Activated CD4-positive, alpha-beta memory T cell treated with anti-CD3 and anti-CD28 coated beads for 36 hours (primary cell): ENCODE measurements at regions of chr12 and their contacts with region 1.

Region 1: DNA sequence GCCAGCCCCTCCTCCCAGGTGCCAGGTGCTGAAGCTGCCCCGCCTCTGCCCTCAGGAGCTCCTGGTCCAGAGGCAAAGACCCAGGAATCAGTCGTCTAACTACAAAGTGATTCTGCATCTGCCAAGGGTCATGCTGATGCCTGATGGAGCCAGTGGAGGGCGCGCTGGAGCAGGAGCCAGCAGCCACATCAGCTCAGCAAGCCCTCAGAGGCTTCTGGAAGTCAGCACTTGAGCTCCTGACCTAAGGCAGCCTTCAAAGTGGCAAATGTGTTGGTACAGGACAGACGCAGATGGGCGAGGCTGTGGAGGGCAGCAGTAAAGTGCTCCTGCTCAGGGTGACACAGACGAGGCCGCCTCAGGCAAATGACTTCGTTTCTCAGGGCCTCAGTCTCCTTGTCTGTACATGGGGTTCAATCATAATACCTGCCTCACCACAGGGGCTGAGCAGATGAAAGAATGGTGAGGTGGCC is 10.9 kb downstream of the C12orf43 start:
- DNase-seq: peak; percentile 76
- H3K4me3 Mint-ChIP-seq: no peak overlapping the region
- H3K27ac Mint-ChIP-seq: peak overlapping the region; percentile 64
- H3K4me1 Mint-ChIP-seq: no peaks in the 10 kb centered on the region
- H3K27me3 Mint-ChIP-seq: no peaks in the 10 kb centered on the region

Region 2: DNA sequence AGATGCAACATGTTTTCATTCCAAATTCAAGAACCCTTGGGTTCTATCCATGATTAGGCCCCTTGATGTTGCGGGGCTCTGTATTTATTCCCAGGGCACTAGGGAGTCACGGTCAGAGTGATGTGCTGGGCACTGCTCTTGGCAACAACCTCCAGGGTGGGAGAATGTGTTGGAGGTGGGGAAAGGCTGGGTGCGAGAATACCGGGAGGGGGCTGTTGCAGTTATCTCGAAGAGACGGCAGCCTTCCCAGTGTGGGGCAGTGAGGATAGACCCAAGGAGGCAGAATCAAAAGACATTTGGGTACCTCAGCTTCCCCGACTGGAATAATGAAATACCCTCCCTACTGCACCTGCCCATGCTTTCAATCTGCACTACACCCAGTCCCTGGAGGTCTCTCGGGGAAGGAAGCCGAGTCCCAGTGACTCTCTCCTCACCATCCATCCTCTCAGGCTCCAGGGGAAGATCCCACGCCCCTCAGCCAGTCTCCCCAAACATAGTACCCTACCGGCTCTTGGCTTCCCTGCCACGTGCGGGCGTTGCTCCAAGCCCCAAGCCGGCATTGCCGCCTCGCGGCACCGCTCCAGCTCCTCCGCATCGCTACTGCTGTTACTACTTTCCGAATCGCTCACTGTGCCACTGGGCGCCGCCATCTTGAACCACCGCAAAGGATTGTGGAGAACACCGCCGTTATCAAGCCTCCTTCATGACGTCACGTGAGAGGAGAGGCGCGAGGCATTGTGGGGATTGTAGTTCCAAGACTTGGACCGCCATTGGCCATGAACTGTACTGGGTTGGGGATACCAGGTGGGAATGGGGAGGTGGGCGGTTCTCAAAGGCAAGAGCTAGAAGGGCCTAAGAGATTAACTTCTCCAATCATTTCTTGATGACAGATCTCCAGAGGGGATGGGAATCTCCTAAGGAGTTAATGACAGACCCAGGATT is 10.7 kb after region 1 on chr12 and contains the start of gene C12orf43:
- CTCF ChIA-PET with region 1: interaction called, 12 read pairs
- POLR2A ChIA-PET with region 1: no interaction called
- intact Hi-C with region 1: no loop called
- DNase-seq: peak; percentile 96
- H3K4me3 Mint-ChIP-seq: peak within 1 kb of the TSS; percentile 98
- H3K27ac Mint-ChIP-seq: peak within 1 kb of the TSS; percentile 88
- H3K4me1 Mint-ChIP-seq: peaks cover 16% of the 10 kb centered on the region
- H3K27me3 Mint-ChIP-seq: no peaks in the 10 kb centered on the region
- total RNA-seq, gene C12orf43: 19.4 to 19.6 TPM

Region 3: DNA sequence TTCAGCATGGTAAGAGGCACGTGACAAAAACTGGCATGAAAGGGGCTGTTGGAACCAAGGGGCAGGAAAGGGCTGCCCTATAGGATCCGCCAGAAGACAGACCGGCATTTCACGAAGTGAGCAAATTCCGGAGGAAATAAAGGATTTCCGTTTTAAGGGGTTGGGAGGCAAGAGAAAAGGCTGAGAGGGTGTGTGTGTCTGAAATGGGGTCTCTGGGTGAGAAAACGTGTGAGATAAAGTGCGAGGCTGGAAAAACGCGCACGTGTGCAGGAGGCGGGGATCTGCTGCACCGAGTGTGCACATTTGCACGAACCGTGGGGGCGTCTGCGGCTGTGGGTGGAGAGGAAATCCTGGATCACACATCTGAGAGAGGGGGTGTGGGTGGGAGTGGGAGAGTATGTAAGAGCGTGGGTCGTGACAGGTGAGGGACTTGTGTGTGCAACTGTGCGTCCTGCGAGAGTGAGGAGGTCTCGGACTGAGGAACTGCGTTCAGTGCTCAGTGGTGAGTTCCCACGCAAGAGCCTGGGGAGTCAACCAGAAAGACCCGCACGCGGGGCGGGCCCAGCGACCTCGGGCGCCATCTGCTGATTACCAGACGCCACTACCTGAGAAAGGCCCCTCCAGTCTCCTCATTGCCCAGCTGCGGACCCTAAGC is 90.3 kb after region 1 on chr12:
- CTCF ChIA-PET with region 1: interaction called, 36 read pairs
- POLR2A ChIA-PET with region 1: no interaction called
- intact Hi-C with region 1: loop called (anchors 1 kb)
- DNase-seq: peak; percentile 87
- H3K4me3 Mint-ChIP-seq: peak overlapping the region; percentile 68
- H3K27ac Mint-ChIP-seq: no peak overlapping the region
- H3K4me1 Mint-ChIP-seq: peaks cover 35% of the 10 kb centered on the region
- H3K27me3 Mint-ChIP-seq: peaks cover 1% of the 10 kb centered on the region

Region 4: DNA sequence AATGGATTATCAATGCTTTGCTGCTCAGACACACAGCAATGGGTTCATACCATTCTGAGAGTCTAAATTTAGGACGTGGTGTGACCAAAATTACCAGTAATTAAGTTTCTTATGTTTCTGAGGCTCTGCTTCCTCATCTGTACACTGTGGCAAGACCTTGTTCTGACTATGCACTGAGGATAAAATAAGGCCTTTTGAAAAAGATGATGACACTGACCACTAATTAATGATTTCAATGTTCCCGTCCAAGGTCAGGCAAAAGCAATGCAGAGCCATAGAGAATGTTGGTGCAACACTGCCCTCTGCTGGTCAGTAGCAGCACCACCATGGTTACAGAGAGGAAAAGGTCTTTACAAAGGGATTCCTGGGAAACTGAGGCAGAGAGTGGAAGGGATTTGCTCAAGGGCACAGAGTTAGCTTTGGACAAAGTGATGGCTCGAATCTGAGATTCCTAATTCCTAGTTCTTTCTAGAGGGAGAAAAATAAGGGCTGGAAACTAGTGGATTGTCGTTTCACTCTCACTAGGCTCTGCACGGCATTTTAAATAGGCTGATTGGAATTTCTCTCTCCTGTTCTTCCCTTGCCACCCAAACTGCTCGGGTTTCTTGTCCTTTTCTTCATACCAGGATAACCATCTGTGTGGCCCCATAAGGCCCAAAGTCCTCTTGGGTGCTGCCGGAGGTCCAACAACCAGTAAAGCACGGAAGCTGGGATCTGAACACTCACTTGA is 105.0 kb after region 1 on chr12:
- CTCF ChIA-PET with region 1: interaction called, 28 read pairs
- POLR2A ChIA-PET with region 1: no interaction called
- intact Hi-C with region 1: loop called (anchors 1 kb)
- DNase-seq: peak; percentile 75
- H3K4me3 Mint-ChIP-seq: no peak overlapping the region
- H3K27ac Mint-ChIP-seq: peak overlapping the region; percentile 42
- H3K4me1 Mint-ChIP-seq: peaks cover 3% of the 10 kb centered on the region
- H3K27me3 Mint-ChIP-seq: no peaks in the 10 kb centered on the region

Region 5: DNA sequence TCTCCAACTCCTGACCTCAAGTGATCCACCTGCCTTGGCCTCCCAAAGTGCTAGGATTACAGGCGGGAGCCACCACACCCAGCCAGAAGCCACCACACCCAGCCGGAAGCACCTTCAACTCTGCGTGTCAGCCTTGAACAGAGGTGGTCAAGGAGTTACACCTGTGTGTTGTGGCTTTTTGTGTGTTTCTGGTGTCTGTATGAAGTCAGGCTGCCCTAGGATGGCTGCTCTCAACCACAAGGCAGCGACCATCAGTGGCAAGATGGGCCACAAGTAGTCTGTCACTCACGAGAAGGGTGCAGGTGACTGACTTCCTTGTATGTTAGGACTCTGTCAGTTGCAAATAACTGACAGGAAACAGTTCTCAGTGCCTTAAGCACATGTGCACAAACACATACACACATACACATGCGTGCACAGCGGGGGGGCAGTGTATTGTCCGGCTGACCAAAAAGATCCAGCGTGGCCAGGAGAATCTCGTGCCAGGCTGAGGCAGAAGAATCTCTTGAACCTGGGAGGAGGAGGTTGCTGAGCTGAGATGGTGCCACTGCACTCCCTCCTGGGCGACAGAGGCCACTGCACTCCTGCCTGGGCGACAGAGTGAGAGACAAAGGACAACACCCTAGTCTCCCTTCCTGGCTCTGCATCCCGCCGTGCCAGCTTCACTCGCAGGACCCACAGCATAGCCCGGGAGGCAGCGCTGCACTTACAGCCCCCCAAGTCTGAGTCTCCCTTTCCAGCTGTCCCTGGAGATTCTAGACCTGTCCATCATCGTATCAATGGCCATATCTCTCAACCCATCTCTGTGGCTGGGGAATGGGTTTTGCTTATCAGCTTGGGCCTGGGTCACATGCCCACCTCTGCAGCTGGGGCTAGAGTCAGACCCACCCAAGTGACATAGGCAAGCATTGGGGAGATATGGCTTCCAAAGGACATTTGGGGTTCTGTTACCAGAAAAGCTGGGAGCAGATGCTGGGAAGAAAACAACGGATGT is 218.2 kb after region 1 on chr12:
- CTCF ChIA-PET with region 1: interaction called, 13 read pairs
- POLR2A ChIA-PET with region 1: no interaction called
- intact Hi-C with region 1: no loop called
- DNase-seq: peak; percentile 70
- H3K4me3 Mint-ChIP-seq: no peak overlapping the region
- H3K27ac Mint-ChIP-seq: peak overlapping the region; percentile 85
- H3K4me1 Mint-ChIP-seq: peaks cover 43% of the 10 kb centered on the region
- H3K27me3 Mint-ChIP-seq: no peaks in the 10 kb centered on the region

Region 6: GRCh38 chr12:121279507-121279915 is 274.1 kb after region 1 on chr12:
- CTCF ChIA-PET with region 1: no interaction called
- POLR2A ChIA-PET with region 1: no interaction called
- intact Hi-C with region 1: no loop called
- DNase-seq: no peak
- H3K4me3 Mint-ChIP-seq: no peak overlapping the region
- H3K27ac Mint-ChIP-seq: no peak overlapping the region
- H3K4me1 Mint-ChIP-seq: peaks cover 8% of the 10 kb centered on the region
- H3K27me3 Mint-ChIP-seq: no peaks in the 10 kb centered on the region